Endothelial cell of umbilical vein (primary cell): ENCODE measurements at regions of chr1 and their contacts with region 1.

Region 1: GRCh38 chr1:168178638-168179437 is at the start of gene TIPRL:
- DNase-seq: peak; percentile 99
- H3K4me3 ChIP-seq: peak within 1 kb of the TSS; percentile 88 to 99 (median 99)
- H3K27ac ChIP-seq: peak within 1 kb of the TSS; percentile 69
- H3K4me1 ChIP-seq: peaks cover 12% of the 10 kb centered on the region
- H3K27me3 ChIP-seq: peaks cover 0 to 2% of the 10 kb centered on the region in 2 experiments
- CTCF ChIP-seq: peak; percentile 50 to 62
- POLR2A ChIP-seq: peak; percentile 89
- total RNA-seq, gene TIPRL: 37.6 and 45.8 TPM in 2 replicates

Region 2: GRCh38 chr1:167936068-167936929 is 242.5 kb before region 1 on chr1 and contains the start of gene DCAF6:
- CTCF ChIA-PET with region 1: no interaction called
- POLR2A ChIA-PET with region 1: no interaction called
- dilution Hi-C with region 1: no loop called
- intact Hi-C with region 1: loop called (anchors 1 kb)
- DNase-seq: peak; percentile 99
- H3K4me3 ChIP-seq: peak within 1 kb of the TSS; percentile 87 to 95 (median 93)
- H3K27ac ChIP-seq: peak within 1 kb of the TSS; percentile 93
- H3K4me1 ChIP-seq: peaks cover 18% of the 10 kb centered on the region
- H3K27me3 ChIP-seq: no peaks in the 10 kb centered on the region
- CTCF ChIP-seq: no peak
- POLR2A ChIP-seq: peak; percentile 89
- total RNA-seq, gene DCAF6: 38.7 and 39.4 TPM in 2 replicates

Region 3: GRCh38 chr1:168136709-168137514 is 41.9 kb before region 1 on chr1 and contains the start of gene GPR161:
- CTCF ChIA-PET with region 1: interaction called, 4 read pairs
- POLR2A ChIA-PET with region 1: no interaction called
- dilution Hi-C with region 1: no loop called
- intact Hi-C with region 1: loop called (anchors 1 kb)
- DNase-seq: peak; percentile 63
- H3K4me3 ChIP-seq: peak within 1 kb of the TSS; percentile 73 to 92 (median 77)
- H3K27ac ChIP-seq: peak within 1 kb of the TSS; percentile 44
- H3K4me1 ChIP-seq: peaks cover 19% of the 10 kb centered on the region
- H3K27me3 ChIP-seq: no peaks in the 10 kb centered on the region
- CTCF ChIP-seq: no peak
- POLR2A ChIP-seq: peak; percentile 69
- total RNA-seq, gene GPR161: 34.8 and 36.5 TPM in 2 replicates

Region 4: DNA sequence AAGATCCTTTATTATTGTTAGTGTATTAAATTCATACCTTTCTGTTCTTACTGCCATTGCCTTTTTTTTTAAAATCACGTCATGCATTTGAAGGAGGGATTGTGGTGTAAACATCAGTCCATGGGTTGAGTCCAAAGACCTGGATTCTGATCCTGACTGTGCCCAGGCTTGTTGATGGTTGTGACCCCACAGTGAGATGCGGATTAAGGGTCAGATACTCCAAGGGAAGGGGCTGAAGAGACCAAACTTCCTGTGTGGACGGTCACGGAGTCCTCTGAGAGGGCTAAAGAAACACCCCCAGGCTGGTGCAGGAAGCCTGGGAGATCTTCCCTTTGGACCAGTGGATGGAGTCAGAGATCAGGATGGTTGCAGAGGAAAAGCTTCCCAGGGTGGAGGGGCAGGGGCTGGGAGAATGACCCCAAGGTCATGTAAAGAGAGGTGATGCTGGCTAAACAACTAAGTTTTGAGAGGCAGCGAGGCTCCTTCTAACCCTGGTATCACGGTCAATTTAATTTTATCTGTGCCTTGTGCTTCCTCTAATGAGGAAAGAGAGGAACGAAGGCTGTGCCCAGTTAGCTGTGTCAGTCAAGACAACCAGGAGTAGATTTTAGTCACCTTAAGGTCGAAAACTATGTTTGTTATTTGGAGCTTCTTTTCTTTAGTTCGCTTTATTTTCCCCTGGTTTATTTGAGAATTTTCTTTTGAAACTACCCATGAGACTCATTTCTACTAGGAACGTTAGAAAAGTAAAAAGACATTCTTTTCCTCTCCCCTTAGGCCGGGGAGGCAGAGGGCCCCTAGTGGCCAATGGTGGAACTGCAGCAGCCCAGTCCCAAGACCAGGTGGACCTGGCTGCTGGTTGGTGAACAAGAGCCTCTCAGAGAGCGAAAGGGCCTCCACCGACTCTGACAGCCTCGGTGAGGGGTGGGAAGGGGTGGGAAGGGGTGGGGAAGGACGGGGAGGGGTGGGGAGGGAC is 33.4 kb before region 1 on chr1:
- CTCF ChIA-PET with region 1: no interaction called
- POLR2A ChIA-PET with region 1: no interaction called
- dilution Hi-C with region 1: no loop called
- intact Hi-C with region 1: loop called (anchors 2 kb)
- DNase-seq: peak; percentile 83
- H3K4me3 ChIP-seq: no peak overlapping the region
- H3K27ac ChIP-seq: no peak overlapping the region
- H3K4me1 ChIP-seq: no peaks in the 10 kb centered on the region
- H3K27me3 ChIP-seq: peaks cover 0 to 5% of the 10 kb centered on the region in 2 experiments
- CTCF ChIP-seq: peak; percentile 92 to 97
- POLR2A ChIP-seq: no peak

Region 5: DNA sequence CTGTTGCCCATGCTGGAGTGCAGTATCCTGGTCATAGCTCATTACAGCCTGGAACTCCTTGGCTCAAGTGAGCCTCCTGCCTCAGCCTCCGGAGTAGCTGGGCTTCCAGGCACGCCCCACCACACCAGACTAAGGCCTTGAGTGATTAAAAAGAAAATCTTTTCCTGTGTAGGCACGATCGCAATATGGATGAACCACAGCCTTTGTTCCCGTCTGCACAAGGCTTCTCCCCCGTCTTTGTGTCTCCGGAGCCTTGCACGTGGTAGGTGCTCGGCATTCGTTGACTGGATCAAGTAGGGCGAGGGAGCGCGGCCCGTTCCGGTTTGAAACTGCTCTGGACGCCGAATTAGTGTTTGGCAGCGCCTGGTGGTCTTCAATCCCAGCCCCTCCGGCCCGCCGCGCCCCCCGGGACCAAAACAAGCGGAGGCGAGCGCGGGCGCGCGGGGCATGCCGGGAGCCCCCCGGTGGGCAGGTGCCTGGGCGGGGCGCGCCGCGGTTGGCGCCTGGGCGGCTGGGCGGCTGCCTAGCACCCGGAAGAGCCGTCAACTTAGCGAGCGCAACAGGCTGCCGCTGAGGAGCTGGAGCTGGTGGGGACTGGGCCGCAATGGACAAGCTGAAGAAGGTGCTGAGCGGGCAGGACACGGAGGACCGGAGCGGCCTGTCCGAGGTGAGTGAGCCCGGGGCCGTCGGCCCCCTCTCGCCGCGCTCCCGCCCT is 46.8 kb after region 1 on chr1 and contains the start of gene SFT2D2:
- CTCF ChIA-PET with region 1: no interaction called
- POLR2A ChIA-PET with region 1: no interaction called
- dilution Hi-C with region 1: no loop called
- intact Hi-C with region 1: loop called (anchors 1 kb)
- DNase-seq: peak; percentile 78
- H3K4me3 ChIP-seq: peak within 1 kb of the TSS; percentile 63 to 88 (median 65)
- H3K27ac ChIP-seq: peak within 1 kb of the TSS; percentile 83
- H3K4me1 ChIP-seq: peaks cover 23% of the 10 kb centered on the region
- H3K27me3 ChIP-seq: peaks cover 6 to 7% of the 10 kb centered on the region in 2 experiments
- CTCF ChIP-seq: no peak
- POLR2A ChIP-seq: peak; percentile 47
- total RNA-seq, gene SFT2D2: 63.8 and 68.1 TPM in 2 replicates

Region 6: GRCh38 chr1:168261390-168261789 is 82.6 kb after region 1 on chr1:
- CTCF ChIA-PET with region 1: no interaction called
- POLR2A ChIA-PET with region 1: no interaction called
- dilution Hi-C with region 1: no loop called
- intact Hi-C with region 1: loop called (anchors 1 kb)
- DNase-seq: peak; percentile 90
- H3K4me3 ChIP-seq: peak overlapping the region in 1 of 3 experiments; percentile 39
- H3K27ac ChIP-seq: peak overlapping the region; percentile 84
- H3K4me1 ChIP-seq: peaks cover 28% of the 10 kb centered on the region
- H3K27me3 ChIP-seq: no peaks in the 10 kb centered on the region
- CTCF ChIP-seq: no peak
- POLR2A ChIP-seq: no peak

Region 7: GRCh38 chr1:169367486-169368405 is 1188.9 kb after region 1 on chr1 and contains the starts of genes BLZF1 and NME7:
- CTCF ChIA-PET with region 1: no interaction called
- POLR2A ChIA-PET with region 1: no interaction called
- dilution Hi-C with region 1: no loop called
- intact Hi-C with region 1: loop called (anchors 2 kb)
- DNase-seq: peak; percentile 98
- H3K4me3 ChIP-seq: peak within 1 kb of the TSS; percentile 97 to 100 (median 98)
- H3K27ac ChIP-seq: peak within 1 kb of the TSS; percentile 96
- H3K4me1 ChIP-seq: peaks cover 19% of the 10 kb centered on the region
- H3K27me3 ChIP-seq: no peaks in the 10 kb centered on the region
- CTCF ChIP-seq: no peak
- POLR2A ChIP-seq: peak; percentile 84
- total RNA-seq, gene BLZF1: 19.7 and 21.2 TPM in 2 replicates
- total RNA-seq, gene NME7: 25.0 and 25.3 TPM in 2 replicates